Activated CD8-positive, alpha-beta T cell treated with anti-CD3 and anti-CD28 coated beads, Interleukin-2, amount 10 ng/mL, durations not matched to agents 7 days and 5 days (primary cell): ENCODE measurements at regions of chr1 and their contacts with region 1.

Region 1: DNA sequence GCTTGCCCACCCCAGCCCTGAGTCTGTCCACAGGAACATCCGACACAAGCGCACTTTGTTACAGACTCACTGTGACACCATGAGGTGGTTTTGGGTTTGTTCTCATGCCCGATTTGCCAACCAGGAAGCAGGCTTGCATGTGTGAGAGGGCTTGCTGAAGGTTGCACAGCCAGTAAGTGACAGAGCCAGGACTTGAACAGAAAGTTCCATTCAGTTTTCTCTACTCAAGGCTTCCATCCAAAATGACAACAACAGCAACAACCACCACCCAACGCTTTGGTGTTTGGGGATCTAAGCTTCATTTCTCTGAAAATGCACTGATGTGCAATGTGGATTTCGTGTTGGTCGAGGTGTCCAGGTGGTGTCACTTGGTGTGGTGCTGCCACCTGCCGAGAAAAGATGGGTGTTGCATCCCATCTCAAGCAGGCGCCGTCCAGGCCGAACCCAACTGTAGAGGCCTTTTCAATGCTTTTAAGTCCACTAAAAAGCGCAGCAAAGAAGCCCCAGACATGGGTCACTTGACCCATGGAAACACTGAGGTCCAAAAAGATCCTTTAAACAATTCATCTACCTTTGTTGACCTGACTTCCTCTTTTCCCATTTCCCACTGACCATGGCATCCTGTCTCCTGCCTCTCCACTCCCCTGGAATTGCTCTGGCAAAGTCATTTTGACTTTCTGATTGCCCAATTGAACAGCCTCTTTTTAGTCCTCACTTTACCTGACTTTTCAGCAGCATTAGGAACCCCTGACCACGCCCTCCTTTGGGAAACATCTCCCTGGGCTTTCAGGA is 12.2 kb downstream of the CITED4 start:
- DNase-seq: peak; percentile 86
- ATAC-seq: peak; percentile 92
- H3K4me3 Mint-ChIP-seq: peak overlapping the region; percentile 32
- H3K27ac Mint-ChIP-seq: peak overlapping the region; percentile 80
- H3K4me1 Mint-ChIP-seq: peaks cover 32% of the 10 kb centered on the region
- H3K27me3 Mint-ChIP-seq: peaks cover 4% of the 10 kb centered on the region

Region 2: GRCh38 chr1:40531381-40532061 is 318.5 kb before region 1 on chr1 and contains the start of gene ZNF684:
- CTCF ChIA-PET with region 1: interaction called, 18 read pairs
- POLR2A ChIA-PET with region 1: no interaction called
- DNase-seq: peak; percentile 91
- ATAC-seq: peak; percentile 97
- H3K4me3 Mint-ChIP-seq: peak within 1 kb of the TSS; percentile 97
- H3K27ac Mint-ChIP-seq: peak within 1 kb of the TSS; percentile 95
- H3K4me1 Mint-ChIP-seq: peaks cover 20% of the 10 kb centered on the region
- H3K27me3 Mint-ChIP-seq: peaks cover 13% of the 10 kb centered on the region
- total RNA-seq, gene ZNF684: 6.1 to 7.9 TPM

Region 3: GRCh38 chr1:40691538-40692428 is 158.2 kb before region 1 on chr1 and contains the start of gene NFYC:
- CTCF ChIA-PET with region 1: interaction called, 20 read pairs
- POLR2A ChIA-PET with region 1: interaction called, 7 read pairs
- DNase-seq: peak; percentile 98
- ATAC-seq: peak; percentile 89
- H3K4me3 Mint-ChIP-seq: peak within 1 kb of the TSS; percentile 87
- H3K27ac Mint-ChIP-seq: peak within 1 kb of the TSS; percentile 93
- H3K4me1 Mint-ChIP-seq: peaks cover 52% of the 10 kb centered on the region
- H3K27me3 Mint-ChIP-seq: no peaks in the 10 kb centered on the region
- total RNA-seq, gene NFYC: 71.5 to 74.4 TPM

Region 4: DNA sequence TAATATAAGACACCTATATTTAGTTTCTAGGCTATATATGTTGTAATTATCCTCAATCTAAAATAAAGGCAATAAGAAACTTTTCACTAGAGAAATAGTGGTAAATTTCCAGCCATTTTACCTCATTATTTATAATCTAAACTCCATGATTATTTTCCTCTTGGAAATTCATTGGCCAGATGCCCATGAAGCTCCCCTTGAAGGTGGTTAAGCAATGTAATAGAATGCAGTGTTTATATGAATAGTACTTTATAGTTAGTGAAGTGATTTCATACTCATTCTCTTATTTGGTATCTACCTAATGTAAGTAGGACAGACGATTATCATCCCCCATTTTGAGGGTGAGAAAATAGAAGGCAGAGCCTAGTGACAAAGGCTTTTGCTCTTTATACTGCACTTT is 132.0 kb before region 1 on chr1:
- CTCF ChIA-PET with region 1: interaction called, 11 read pairs
- POLR2A ChIA-PET with region 1: no interaction called
- DNase-seq: no peak
- ATAC-seq: no peak
- H3K4me3 Mint-ChIP-seq: no peak overlapping the region
- H3K27ac Mint-ChIP-seq: no peak overlapping the region
- H3K4me1 Mint-ChIP-seq: peaks cover 36% of the 10 kb centered on the region
- H3K27me3 Mint-ChIP-seq: no peaks in the 10 kb centered on the region

Region 5: GRCh38 chr1:40796939-40797667 is 52.9 kb before region 1 on chr1:
- CTCF ChIA-PET with region 1: interaction called, 26 read pairs
- POLR2A ChIA-PET with region 1: no interaction called
- DNase-seq: no peak
- ATAC-seq: no peak
- H3K4me3 Mint-ChIP-seq: peak overlapping the region; percentile 3
- H3K27ac Mint-ChIP-seq: peak overlapping the region; percentile 74
- H3K4me1 Mint-ChIP-seq: peaks cover 62% of the 10 kb centered on the region
- H3K27me3 Mint-ChIP-seq: peaks cover 2% of the 10 kb centered on the region

Region 6: GRCh38 chr1:40951943-40952743 is 102.1 kb after region 1 on chr1:
- CTCF ChIA-PET with region 1: interaction called, 107 read pairs
- POLR2A ChIA-PET with region 1: no interaction called
- DNase-seq: peak; percentile 68
- ATAC-seq: peak; percentile 85
- H3K4me3 Mint-ChIP-seq: no peak overlapping the region
- H3K27ac Mint-ChIP-seq: peak overlapping the region; percentile 55
- H3K4me1 Mint-ChIP-seq: peaks cover 27% of the 10 kb centered on the region
- H3K27me3 Mint-ChIP-seq: peaks cover 31% of the 10 kb centered on the region

Region 7: GRCh38 chr1:40973912-40974311 is 123.9 kb after region 1 on chr1:
- CTCF ChIA-PET with region 1: no interaction called
- POLR2A ChIA-PET with region 1: no interaction called
- DNase-seq: no peak
- ATAC-seq: no peak
- H3K4me3 Mint-ChIP-seq: no peak overlapping the region
- H3K27ac Mint-ChIP-seq: no peak overlapping the region
- H3K4me1 Mint-ChIP-seq: peaks cover 15% of the 10 kb centered on the region
- H3K27me3 Mint-ChIP-seq: peaks cover 4% of the 10 kb centered on the region